IMR-90 (cell line): ENCODE measurements at regions of chr10 and their contacts with region 1.

Region 1: DNA sequence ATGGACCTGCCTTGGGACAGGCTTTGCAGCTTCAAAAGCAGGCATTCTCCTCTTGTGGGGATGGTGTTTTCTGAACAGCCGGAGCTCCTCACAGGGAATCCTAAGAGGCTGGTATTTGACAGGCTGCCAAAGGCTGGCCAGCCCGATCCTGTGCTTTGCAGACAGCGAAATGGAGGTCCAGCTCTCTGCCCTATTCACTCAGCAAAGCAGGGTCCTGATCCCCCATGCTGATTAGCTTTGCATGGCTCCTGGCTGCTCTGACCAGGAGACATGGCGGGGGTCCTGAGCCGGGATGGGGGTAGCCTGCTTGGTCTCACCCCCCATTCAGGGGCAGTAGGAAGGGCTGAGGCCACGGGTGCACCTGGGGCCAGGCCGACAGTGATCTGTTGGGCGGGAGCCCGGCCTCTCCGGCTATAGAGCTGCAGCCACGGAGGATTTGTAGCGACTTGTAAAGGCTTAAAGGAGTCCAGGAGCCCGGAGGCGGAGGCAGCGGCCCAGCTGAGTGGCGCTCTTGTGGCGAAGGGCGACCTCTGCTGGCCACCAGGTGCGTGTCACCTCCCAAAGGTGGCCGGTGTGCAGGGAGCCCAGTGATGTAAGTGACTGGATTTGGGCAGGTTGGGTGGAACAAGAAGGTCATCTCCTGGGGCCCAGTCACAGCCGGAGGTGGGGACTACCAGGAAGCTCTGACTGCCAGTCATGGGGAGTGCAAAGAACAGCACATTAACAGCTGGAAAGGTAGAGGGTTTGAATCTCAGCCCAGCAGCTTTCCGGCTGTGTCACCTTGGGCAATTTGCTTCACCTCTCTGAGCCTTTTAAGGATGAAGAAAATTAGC is 126.5 kb downstream of the ZMIZ1 start:
- DNase-seq: peak; percentile 81
- ATAC-seq: peak; percentile 78
- H3K4me3 ChIP-seq: no peak overlapping the region
- H3K27ac ChIP-seq: peak overlapping the region; percentile 76
- H3K4me1 ChIP-seq: peaks cover 35% of the 10 kb centered on the region
- H3K27me3 ChIP-seq: no peaks in the 10 kb centered on the region
- CTCF ChIP-seq: peak; percentile 88
- POLR2A ChIP-seq: peak; percentile 59; the same call in 1 of the 2 replicates
- RAD21 ChIP-seq: peak; percentile 96

Region 2: DNA sequence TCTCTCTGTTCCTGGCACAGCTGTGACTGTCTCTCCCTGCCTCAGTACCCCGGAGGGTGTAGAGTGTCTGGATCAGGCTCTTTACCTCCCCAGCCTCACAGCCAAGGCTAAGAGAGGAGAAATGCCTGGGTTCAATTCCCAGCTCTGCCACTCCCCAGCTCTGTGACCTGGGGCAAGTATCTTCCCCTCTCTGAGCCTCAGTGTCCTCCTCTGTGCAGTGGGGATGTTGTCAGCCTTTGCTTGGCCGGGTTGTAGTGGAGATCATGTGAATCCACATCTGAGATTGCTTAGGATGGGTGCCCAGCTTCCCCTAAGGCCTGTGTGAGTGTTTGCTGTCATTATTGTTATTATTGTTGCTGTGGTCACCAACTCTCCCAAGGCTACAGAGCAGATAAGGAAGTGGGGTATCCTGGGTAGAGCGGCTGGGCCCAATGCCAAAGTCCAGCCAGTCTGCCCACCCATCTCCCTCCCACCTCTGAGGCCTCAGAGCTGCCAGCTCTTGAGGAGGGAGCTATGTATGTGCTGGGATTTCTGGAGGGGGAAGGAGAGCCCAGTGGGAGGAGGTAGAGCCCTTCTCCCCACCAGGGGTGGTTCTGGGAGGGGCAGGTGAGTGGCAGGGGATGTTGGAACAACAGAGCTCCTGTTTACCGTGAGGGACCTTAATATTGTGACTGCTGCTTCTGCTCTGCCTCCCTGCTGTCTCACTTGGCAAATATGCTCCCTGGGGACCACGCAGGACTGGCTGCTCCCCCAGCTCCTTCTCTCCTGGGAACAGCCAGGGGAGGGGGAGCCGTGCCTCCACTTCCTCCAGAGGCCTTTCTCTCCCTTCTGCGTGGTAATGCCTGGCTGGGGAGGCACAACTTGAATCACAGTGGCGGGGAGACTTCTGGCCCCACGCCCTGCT is 991.1 kb before region 1 on chr10:
- CTCF ChIA-PET with region 1: no interaction called
- POLR2A ChIA-PET with region 1: no interaction called
- dilution Hi-C with region 1: no loop called
- in situ Hi-C with region 1: loop called (anchors 10 kb)
- intact Hi-C with region 1: no loop called
- DNase-seq: no peak
- ATAC-seq: 0 out of 2 replicates have a peak, but pooled peaks have one; percentile 48
- H3K4me3 ChIP-seq: no peak overlapping the region
- H3K27ac ChIP-seq: no peak overlapping the region
- H3K4me1 ChIP-seq: peaks cover 3% of the 10 kb centered on the region
- H3K27me3 ChIP-seq: peaks cover 5% of the 10 kb centered on the region; the same call in 1 of the 2 replicates
- CTCF ChIP-seq: no peak
- POLR2A ChIP-seq: no peak
- RAD21 ChIP-seq: no peak

Region 3: GRCh38 chr10:78648256-78648860 is 546.9 kb before region 1 on chr10:
- CTCF ChIA-PET with region 1: no interaction called
- POLR2A ChIA-PET with region 1: no interaction called
- dilution Hi-C with region 1: no loop called
- in situ Hi-C with region 1: no loop called
- intact Hi-C with region 1: no loop called
- DNase-seq: peak; percentile 55
- ATAC-seq: peak; percentile 89
- H3K4me3 ChIP-seq: no peak overlapping the region
- H3K27ac ChIP-seq: no peak overlapping the region
- H3K4me1 ChIP-seq: peaks cover 6% of the 10 kb centered on the region
- H3K27me3 ChIP-seq: no peaks in the 10 kb centered on the region
- CTCF ChIP-seq: no peak
- POLR2A ChIP-seq: no peak
- RAD21 ChIP-seq: no peak

Region 4: DNA sequence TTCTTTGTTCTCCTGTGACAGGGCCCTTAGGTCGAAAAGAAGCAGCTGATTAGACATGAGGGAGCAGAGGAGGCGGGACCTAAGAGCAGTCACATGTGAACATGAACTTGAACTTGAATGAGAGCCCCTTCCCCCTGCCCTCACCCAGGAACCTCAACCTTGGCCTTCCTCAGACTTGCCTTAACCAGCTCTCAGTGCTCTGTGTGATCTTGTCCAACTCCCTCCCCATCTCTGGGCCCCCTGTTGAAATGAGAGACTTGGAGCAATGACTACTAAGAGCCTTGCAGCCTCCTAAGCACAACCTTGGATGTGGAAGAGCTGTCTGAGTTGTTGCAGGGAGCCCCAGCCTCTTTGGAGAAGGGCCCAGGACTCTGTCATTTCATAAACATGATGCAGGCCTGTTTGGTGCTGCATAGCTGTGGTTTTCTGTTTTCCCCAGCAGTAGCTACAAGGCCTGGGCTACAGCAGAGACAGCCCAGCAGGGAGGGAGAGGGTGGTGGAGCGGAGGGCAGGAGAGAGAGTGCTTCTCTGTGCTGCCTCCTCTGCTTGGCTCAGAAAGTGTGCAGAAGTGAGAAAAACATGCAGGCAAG is 250.5 kb before region 1 on chr10:
- CTCF ChIA-PET with region 1: no interaction called
- POLR2A ChIA-PET with region 1: no interaction called
- dilution Hi-C with region 1: no loop called
- in situ Hi-C with region 1: no loop called
- intact Hi-C with region 1: loop called (anchors 10 kb)
- DNase-seq: peak; percentile 98
- ATAC-seq: peak; percentile 99
- H3K4me3 ChIP-seq: no peak overlapping the region
- H3K27ac ChIP-seq: peak overlapping the region; percentile 75; the same call in 1 of the 2 replicates
- H3K4me1 ChIP-seq: peaks cover 34% of the 10 kb centered on the region
- H3K27me3 ChIP-seq: peaks cover 3% of the 10 kb centered on the region; the same call in 1 of the 2 replicates
- CTCF ChIP-seq: peak; percentile 27
- POLR2A ChIP-seq: no peak
- RAD21 ChIP-seq: peak; percentile 46

Region 5: DNA sequence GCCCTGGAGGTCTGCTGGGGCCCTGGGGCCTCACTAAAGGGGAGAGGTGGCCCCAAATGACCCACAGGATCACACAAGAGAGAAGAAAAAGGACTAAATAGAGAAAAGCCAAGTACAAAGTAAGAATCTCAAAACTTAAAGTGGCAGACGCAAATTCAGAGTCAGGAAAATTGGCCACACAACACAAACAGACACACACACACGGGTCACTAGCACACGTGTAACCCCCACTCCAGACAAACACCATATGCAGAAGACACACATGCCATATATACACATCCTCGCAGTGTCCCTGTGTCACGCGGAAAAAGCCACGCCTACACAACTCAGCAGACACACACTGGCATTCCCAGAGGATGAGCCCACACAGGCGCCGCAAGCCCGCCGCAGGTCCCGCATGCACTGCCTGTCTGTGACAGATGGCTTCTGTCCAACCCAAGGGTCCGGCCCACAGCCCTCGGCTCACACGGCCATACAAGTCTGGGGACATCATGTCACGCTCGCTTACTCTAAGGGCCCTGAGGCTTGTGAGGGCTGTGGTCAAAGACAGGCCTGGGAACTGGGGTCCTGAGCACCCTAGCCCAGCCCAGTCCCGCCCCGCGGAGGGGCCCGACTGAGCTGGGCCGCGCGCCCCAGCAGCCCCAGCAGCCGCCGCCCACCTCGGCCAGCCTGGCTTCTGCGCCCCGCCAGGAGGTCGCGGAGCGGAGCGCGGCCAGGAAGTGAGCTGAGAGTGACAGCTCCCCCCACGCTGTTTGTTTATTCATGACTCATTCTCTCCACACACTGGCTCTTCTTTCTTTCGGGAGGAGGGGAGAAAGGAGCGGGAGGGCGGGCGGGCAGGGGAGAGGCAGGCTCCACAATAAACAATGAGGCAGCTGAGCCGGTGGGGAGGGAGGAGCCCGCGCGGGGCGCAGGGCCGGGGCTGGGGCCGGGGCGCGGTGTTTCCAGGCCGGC is 222.1 kb before region 1 on chr10:
- CTCF ChIA-PET with region 1: interaction called, 5 read pairs
- POLR2A ChIA-PET with region 1: no interaction called
- dilution Hi-C with region 1: no loop called
- in situ Hi-C with region 1: no loop called
- intact Hi-C with region 1: loop called (anchors 5 kb)
- DNase-seq: peak; percentile 95
- ATAC-seq: peak; percentile 69
- H3K4me3 ChIP-seq: 0 out of 2 replicates have a peak overlapping the region, but pooled peaks have one; percentile 3
- H3K27ac ChIP-seq: peak overlapping the region; percentile 98
- H3K4me1 ChIP-seq: peaks cover 38% of the 10 kb centered on the region
- H3K27me3 ChIP-seq: no peaks in the 10 kb centered on the region
- CTCF ChIP-seq: no peak
- POLR2A ChIP-seq: peak; percentile 69
- RAD21 ChIP-seq: no peak; the same call in 1 of the 2 replicates